ENCODE measurements at regions of chr11 and their contacts with region 1.

Region 1: GRCh38 chr11:110429731-110430266 is at the start of gene FDX1:
- DNase-seq: peak; percentile 93
- ATAC-seq: peak; percentile 83
- H3K4me3 Mint-ChIP-seq: peak within 1 kb of the TSS; percentile 99
- H3K27ac Mint-ChIP-seq: peak within 1 kb of the TSS; percentile 97
- H3K4me1 Mint-ChIP-seq: peaks cover 41% of the 10 kb centered on the region
- H3K27me3 Mint-ChIP-seq: no peaks in the 10 kb centered on the region
- total RNA-seq, gene FDX1: 8.2 to 13.1 TPM

Region 2: DNA sequence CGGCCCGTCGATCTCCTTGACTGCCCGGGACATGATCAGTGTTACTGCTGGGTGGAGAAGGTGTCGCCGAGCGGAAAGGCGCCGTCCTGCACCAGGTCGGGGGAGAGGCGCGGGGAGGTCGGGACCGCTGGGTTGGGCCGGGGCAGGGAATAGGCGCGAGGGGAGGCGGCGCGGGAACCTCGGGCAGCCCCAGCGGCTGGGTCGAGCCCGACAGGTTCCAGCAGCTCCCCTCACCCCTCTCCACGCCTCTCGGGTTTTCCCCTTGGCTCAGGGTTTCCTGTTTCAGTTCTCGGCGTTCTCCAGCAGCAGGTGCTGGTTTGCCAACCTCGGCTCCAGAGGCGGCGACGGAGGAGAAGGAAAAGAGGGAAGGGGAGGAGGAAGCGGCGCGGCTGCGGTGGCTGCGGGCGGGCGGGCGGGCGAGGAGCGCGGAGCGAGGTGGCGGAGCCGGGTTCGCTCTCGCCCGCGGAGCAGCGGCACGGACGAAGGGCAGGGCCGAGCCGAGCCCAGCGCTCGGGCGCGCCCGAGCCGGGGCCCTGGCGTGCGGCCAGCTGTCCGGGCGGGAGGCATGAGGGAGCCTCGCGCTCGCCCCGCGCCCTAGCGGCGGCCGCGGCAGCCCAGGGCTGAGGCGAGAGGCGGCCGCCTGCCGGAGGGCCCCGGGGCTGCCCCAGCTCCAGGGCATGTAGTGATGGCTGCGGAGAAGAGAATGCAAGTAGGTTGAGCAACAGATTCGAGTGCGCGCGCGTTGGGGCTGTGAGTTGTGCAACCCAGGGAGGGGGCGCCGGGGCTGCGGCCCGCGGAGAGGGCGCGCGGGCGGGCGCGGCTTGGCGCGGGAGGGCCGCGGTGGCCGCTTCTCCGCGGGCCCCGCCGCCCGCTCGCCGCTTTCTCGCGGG is 337.0 kb before region 1 on chr11 and contains the start of gene ZC3H12C:
- CTCF ChIA-PET with region 1: no interaction called
- POLR2A ChIA-PET with region 1: no interaction called
- intact Hi-C with region 1: loop called (anchors 2 to 5 kb)
- DNase-seq: peak; percentile 74
- ATAC-seq: peak; percentile 73
- H3K4me3 Mint-ChIP-seq: peak within 1 kb of the TSS; percentile 74
- H3K27ac Mint-ChIP-seq: peak within 1 kb of the TSS; percentile 52
- H3K4me1 Mint-ChIP-seq: peaks cover 10% of the 10 kb centered on the region
- H3K27me3 Mint-ChIP-seq: peaks cover 49% of the 10 kb centered on the region
- total RNA-seq, gene ZC3H12C: 1.6 TPM

Region 3: DNA sequence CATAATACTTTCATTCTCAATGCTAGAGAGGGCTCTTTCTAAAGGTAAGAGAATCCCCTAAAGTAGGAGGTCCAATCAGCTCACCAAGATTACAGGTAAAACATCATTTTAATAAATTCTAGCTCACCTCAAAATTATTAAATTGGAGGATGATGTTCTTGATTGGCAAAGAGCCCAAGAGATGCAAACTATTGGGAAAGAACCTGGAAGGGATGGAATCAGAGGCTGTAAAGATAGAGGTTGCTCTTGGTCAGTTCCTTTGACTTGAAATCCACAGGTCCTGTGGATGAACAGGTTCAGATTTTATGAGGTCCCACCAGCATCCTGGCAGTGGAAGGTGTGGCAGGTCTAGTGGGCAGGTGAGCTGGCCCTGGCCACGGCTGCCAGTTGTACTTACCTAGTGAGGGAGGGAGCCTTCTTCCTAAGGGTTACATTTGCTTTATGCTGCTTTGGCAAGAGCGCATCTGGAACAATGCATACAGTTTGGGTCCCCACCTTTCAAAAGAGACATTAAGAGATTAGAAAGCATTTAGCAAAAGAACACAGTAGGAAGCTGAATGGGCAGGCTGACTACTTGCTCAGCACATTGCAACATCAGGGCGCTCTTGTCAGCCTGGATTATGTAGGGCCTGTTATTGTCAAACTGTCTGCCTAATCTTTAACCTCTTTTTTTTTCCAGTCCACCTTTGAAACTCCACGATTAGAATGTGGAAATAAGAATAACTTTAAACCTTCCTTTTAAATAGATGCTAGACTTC is 230.4 kb before region 1 on chr11:
- CTCF ChIA-PET with region 1: interaction called, 85 read pairs
- POLR2A ChIA-PET with region 1: no interaction called
- intact Hi-C with region 1: loop called (anchors 1 kb)
- DNase-seq: no peak
- ATAC-seq: no peak
- H3K4me3 Mint-ChIP-seq: no peak overlapping the region
- H3K27ac Mint-ChIP-seq: no peak overlapping the region
- H3K4me1 Mint-ChIP-seq: no peaks in the 10 kb centered on the region
- H3K27me3 Mint-ChIP-seq: no peaks in the 10 kb centered on the region

Region 4: DNA sequence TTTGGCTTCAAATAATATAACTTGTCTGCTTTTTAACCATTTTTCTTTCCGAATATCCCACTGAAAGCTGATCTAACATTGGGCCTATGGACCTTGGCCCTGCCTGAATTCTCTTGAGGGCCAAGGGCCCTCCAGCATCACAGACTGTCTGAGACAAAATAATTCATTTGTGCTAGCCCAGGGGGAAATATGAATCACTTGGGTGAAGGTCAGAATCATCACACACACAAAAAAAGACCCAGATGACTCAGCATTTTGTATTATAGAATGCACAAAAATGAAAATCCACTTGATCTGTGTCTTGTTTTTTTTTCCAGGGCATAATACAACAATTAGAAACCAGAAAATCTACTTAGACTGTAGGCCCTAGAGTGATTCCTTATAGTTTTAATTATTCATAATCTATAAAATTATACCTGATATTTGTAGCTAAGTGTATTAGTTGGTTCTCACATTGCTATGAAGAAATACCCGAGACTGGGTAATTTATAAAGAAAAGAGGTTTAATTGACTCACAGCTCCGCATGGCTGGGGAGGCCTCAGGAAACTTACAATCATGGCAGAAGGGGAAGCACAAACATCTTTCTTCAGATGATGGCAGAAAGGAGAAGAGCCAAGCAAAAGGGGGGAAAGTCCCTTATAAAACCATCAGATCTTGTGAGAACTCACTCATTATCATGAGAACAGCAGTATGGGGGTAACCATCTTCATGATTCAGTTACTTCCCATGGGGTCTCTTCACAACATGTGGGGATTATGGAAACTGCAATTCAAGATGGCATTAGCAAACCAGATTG is 117.8 kb before region 1 on chr11:
- CTCF ChIA-PET with region 1: no interaction called
- POLR2A ChIA-PET with region 1: no interaction called
- intact Hi-C with region 1: loop called in 1 of 2 experiments (anchors 5 kb)
- DNase-seq: peak; percentile 21
- ATAC-seq: peak; percentile 86
- H3K4me3 Mint-ChIP-seq: no peak overlapping the region
- H3K27ac Mint-ChIP-seq: peak overlapping the region; percentile 72
- H3K4me1 Mint-ChIP-seq: peaks cover 15% of the 10 kb centered on the region
- H3K27me3 Mint-ChIP-seq: no peaks in the 10 kb centered on the region

Region 5: GRCh38 chr11:110447897-110448745 is 18.3 kb after region 1 on chr11:
- CTCF ChIA-PET with region 1: interaction called, 10 read pairs
- POLR2A ChIA-PET with region 1: no interaction called
- intact Hi-C with region 1: no loop called
- DNase-seq: no peak
- ATAC-seq: no peak
- H3K4me3 Mint-ChIP-seq: no peak overlapping the region
- H3K27ac Mint-ChIP-seq: no peak overlapping the region
- H3K4me1 Mint-ChIP-seq: peaks cover 18% of the 10 kb centered on the region
- H3K27me3 Mint-ChIP-seq: no peaks in the 10 kb centered on the region

Region 6: DNA sequence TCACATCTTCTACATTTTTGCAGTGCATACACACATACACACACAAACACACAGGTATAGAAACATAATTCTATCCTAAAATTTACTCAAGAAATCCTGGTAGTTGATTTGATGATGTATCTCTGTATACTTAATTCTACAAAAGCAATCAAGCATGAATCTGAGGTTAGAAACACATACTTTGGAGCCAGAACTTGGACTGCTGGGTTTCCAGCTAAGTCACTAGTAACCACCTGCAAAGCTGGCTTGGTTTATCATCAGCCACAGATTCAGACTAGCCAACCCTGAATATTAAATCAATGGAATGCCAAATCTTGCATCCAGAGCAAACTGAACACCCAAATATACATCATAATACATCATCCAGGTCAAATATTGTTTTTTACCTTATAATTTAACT is 790.9 kb after region 1 on chr11:
- CTCF ChIA-PET with region 1: no interaction called
- POLR2A ChIA-PET with region 1: no interaction called
- intact Hi-C with region 1: no loop called
- DNase-seq: no peak
- ATAC-seq: no peak
- H3K4me3 Mint-ChIP-seq: no peak overlapping the region
- H3K27ac Mint-ChIP-seq: no peak overlapping the region
- H3K4me1 Mint-ChIP-seq: peaks cover 10% of the 10 kb centered on the region
- H3K27me3 Mint-ChIP-seq: peaks cover 19% of the 10 kb centered on the region

Region 7: GRCh38 chr11:111982019-111982464 is 1552.2 kb after region 1 on chr11:
- CTCF ChIA-PET with region 1: no interaction called
- POLR2A ChIA-PET with region 1: no interaction called
- intact Hi-C with region 1: no loop called
- DNase-seq: peak; percentile 78
- ATAC-seq: peak; percentile 88
- H3K4me3 Mint-ChIP-seq: no peak overlapping the region
- H3K27ac Mint-ChIP-seq: no peak overlapping the region
- H3K4me1 Mint-ChIP-seq: peaks cover 7% of the 10 kb centered on the region
- H3K27me3 Mint-ChIP-seq: peaks cover 22% of the 10 kb centered on the region

Measured in activated CD4-positive, alpha-beta T cell treated with anti-CD3 and anti-CD28 coated beads for 36 hours (primary cell).